Left ventricle myocardium superior (tissue), 1 donor: ENCODE measurements at regions of chr14 and their contacts with region 1.

Region 1: GRCh38 chr14:80996049-80996901 is 40.9 kb downstream of the TSHR start:
- DNase-seq: no peak
- ATAC-seq: peak; percentile 93

Region 2: GRCh38 chr14:80850197-80850814 is 146.0 kb before region 1 on chr14:
- intact Hi-C with region 1: no loop called
- DNase-seq: no peak
- ATAC-seq: no peak

Region 3: DNA sequence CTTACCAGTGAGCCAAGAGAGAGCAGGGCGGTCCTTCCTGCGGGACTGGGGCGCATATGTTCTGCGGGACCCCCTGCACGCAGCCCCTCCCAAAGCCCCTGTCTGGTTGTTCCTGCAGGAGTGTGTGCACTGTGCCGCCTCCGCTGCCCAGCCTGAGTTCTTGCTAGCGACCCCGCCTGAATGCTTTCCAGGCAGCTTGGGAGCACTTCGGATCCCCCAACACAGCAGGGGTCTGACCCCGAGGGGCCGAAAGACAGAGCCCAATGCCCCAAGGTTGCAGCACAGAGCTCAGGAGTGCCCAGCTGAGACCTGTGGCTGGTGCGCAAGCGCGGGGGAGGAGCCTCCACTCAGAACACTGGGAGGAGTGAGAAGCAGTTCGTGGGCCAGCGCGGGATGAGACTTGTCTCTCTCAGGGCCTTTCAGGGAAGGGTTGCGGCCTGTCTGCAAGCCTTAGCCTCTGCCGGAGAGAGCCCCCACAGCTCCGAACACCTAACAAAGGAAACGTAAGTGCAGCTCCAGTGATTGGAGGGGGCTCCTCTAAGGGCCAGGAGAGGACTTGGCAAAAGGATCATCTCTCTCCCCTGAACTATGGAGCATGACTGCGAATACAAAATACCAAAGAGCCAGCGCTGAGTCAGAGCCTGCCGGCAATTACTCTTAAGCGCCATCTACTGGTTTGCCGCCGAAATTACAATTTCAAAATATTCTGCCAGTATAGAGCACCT is 174.0 kb after region 1 on chr14:
- intact Hi-C with region 1: loop called (anchors 5 kb)
- DNase-seq: peak; percentile 96
- ATAC-seq: peak; percentile 100

Region 4: DNA sequence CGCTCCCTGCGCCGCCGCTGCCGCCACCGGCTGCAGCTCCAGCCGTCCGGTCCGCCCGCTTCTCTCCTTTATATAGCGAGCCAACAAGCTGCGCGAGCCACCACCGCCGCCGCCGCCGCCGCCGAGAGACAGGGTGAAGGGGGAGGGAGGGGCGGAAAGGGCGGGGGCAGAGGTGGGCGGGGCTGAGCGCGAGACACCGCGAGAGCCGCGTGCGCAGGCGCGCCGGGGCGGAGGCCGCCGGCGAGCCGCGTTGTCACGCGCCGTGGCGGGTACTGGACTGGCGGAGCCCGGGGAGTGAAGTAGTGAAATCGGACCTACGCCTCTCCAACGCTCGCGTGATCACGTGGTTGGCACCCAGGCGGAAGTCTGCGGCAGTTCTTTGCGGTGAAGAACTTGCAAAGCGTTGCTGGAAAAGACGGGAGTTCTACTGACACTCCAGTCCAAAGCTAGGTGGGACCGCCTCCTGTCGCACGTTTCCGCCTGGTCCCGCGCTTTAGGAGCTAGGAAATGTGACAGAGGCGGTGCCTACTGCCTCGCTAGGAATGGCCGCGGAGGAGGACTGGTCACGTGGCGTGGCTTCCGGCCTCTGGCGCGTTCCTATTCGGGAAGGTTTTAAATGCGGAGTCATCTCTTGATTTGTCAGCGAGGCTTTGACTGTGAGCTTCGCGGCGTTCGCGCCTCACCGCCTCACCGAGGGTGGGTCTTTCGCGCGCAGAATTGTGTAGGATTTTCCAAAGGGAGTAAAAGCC is 224.7 kb after region 1 on chr14 and contains the start of gene GTF2A1:
- intact Hi-C with region 1: no loop called
- DNase-seq: peak; percentile 96
- ATAC-seq: peak; percentile 93
- total RNA-seq, gene GTF2A1: 18.9 TPM